Activated T-helper 2 cell treated with anti-CD3 and anti-CD28 coated beads, Interferon-gamma antibody, Interleukin-2, Interleukin-4, amounts not matched to agents 10 μg/mL and 5 μg/mL and 100 μg/mL, durations not matched to agents 14 hours and 24 hours and 36 hours (primary cell): ENCODE measurements at regions of chr14 and their contacts with region 1.

Region 1: DNA sequence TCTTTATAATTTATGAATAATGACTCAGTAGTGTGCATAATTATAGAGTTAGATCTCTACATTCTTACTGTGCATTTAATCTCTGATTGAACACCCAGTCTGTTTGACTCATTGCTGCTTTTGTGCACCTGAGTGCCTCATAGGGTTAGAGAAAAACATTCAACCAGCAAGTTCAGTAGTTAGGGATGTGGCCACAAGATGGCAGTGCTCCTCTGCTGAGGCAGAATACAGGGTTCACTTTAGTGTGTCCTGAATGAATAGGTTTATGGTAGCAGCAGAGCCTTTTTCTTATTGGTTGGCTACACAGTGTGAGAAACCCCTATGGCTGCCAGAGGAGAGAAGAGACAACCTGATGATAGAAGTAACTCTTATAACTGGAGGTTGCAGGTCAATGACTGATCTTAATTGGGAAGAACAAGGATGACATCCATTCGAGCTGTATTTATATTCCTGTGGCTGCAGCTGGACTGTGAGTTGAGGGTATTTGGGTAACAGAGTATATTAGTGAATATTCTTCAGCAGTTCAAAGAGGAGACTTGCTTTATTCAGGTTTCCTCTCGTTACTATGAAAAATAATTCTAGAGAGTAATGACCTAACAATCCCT is 194.9 kb upstream of the OR4E1 start:
- DNase-seq: peak; percentile 67
- H3K4me3 Mint-ChIP-seq: peak overlapping the region; percentile 65
- H3K27ac Mint-ChIP-seq: no peak overlapping the region
- H3K4me1 Mint-ChIP-seq: peaks cover 32% of the 10 kb centered on the region
- H3K27me3 Mint-ChIP-seq: peaks cover 2% of the 10 kb centered on the region

Region 2: DNA sequence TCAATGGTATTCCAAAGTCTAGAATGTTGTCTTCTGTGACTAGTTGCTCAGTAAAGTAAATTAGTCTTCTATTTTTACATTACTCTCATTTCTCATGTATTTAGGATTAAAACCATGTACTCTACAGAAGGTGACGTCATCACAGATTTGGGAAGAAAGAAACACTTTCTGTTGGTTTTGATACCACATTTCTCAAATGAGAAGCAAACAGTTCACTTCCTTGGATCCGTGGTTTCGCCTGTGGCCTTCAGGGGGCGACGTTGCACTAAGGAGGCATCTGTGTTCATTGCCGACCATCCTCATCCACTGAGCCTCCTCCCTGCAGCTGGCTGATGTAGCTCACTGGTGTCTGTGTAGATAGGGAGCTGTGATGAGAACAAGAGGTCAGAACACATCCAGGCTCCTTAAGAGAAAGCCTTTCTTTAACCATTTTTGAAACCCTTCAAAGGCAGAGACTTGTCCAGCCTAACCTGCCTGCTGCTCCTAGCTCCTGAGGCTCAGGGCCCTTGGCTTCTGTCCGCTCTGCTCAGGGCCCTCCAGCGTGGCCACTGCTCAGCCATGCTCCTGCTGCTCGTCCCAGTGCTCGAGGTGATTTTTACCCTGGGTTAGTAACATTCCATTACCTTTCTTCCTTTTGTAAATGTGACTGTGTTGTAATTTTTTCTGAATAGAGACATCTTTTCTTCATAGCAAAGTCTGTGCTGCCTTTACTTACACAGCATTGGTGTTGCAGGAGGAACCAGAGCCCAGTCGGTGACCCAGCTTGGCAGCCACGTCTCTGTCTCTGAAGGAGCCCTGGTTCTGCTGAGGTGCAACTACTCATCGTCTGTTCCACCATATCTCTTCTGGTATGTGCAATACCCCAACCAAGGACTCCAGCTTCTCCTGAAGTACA is 25.7 kb after region 1 on chr14:
- intact Hi-C with region 1: loop called (anchors 2 kb)
- DNase-seq: peak; percentile 40
- H3K4me3 Mint-ChIP-seq: peak overlapping the region; percentile 79
- H3K27ac Mint-ChIP-seq: peak overlapping the region; percentile 88
- H3K4me1 Mint-ChIP-seq: peaks cover 19% of the 10 kb centered on the region
- H3K27me3 Mint-ChIP-seq: peaks cover 1% of the 10 kb centered on the region